A549 (cell line): ENCODE measurements at regions of chr3 and their contacts with region 1.

Region 1: DNA sequence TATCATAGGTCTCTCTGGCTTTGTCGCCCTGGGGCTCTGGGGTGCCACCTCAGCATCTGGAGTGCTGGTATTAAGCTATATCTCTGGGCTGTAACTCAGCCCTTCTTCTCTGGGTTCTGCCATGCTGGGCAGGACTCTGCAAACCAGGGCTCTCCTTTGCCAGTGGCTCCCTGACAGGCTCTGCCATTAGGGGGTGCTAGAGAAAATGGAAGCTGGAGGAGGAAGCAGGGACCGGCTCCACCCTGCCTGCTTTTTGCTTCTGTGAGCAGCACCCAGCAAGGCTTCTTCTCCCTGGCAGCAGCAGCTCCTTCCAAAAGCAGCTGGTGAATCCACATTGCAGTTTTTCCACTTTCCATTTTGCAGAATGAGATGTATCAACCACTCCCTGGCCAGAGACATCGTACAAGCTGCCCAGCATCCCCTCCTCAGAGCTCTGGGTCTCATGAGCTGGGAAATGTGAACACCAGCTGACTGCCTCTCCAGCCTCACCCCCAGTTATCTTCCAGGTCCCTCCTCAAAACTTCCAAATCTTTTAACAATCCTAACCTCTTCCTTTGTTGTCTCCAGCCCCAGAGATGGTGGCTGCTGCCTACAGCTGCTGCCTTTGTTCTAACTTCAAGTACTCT is 165.0 kb downstream of the ABHD5 start:
- DNase-seq: peak; percentile 29 to 75
- ATAC-seq: peak; percentile 80 to 83
- H3K4me3 ChIP-seq: no peak overlapping the region
- H3K27ac ChIP-seq: peak overlapping the region; percentile 83 to 95; a peak in 5 of 6 replicates
- H3K4me1 ChIP-seq: peaks cover 63% of the 10 kb centered on the region
- CTCF ChIP-seq: peak; percentile 45
- EP300 ChIP-seq: no peak
- POLR2A ChIP-seq: no peak
- RAD21 ChIP-seq: peak; percentile 62 to 64

Region 2: GRCh38 chr3:43843386-43843785 is 12.4 kb before region 1 on chr3:
- CTCF ChIA-PET with region 1: interaction called, 11 read pairs
- POLR2A ChIA-PET with region 1: no interaction called
- DNase-seq: no peak
- ATAC-seq: no peak
- H3K4me3 ChIP-seq: no peak overlapping the region
- H3K27ac ChIP-seq: no peak overlapping the region
- H3K4me1 ChIP-seq: no peaks in the 10 kb centered on the region
- CTCF ChIP-seq: no peak
- EP300 ChIP-seq: no peak
- POLR2A ChIP-seq: no peak
- RAD21 ChIP-seq: no peak

Region 3: DNA sequence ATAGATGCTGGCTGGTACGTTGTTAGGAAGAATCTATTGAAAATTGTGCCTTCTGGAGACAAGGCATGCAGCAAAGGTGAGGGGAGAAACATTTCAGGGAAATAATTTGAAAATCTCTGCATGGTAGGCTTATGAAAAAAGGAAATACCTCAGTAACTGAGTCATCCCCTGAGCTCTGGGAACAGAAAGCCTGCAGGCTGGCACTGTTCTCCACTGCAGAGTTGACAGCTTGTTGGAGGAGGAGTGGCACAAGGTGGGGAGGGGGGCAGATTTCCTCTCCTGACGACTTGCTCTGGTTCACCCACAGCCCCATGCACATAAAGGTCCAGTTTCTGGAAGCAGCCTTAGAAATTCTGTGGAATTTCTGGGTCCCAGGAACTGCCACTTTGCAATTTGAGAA is 14.3 kb after region 1 on chr3:
- CTCF ChIA-PET with region 1: interaction called, 51 read pairs
- POLR2A ChIA-PET with region 1: interaction called, 10 read pairs
- DNase-seq: peak; percentile 52 to 87
- ATAC-seq: peak; percentile 42 to 61; a peak in 5 of 6 replicates
- H3K4me3 ChIP-seq: no peak overlapping the region
- H3K27ac ChIP-seq: peak overlapping the region; percentile 93 to 98
- H3K4me1 ChIP-seq: peaks cover 94% of the 10 kb centered on the region
- CTCF ChIP-seq: no peak
- EP300 ChIP-seq: peak in 1 of 2 experiments; percentile 46; a peak in 1 of 5 replicates
- POLR2A ChIP-seq: no peak
- RAD21 ChIP-seq: no peak